ENCODE measurements at regions of chr5 and their contacts with region 1.

Region 1: DNA sequence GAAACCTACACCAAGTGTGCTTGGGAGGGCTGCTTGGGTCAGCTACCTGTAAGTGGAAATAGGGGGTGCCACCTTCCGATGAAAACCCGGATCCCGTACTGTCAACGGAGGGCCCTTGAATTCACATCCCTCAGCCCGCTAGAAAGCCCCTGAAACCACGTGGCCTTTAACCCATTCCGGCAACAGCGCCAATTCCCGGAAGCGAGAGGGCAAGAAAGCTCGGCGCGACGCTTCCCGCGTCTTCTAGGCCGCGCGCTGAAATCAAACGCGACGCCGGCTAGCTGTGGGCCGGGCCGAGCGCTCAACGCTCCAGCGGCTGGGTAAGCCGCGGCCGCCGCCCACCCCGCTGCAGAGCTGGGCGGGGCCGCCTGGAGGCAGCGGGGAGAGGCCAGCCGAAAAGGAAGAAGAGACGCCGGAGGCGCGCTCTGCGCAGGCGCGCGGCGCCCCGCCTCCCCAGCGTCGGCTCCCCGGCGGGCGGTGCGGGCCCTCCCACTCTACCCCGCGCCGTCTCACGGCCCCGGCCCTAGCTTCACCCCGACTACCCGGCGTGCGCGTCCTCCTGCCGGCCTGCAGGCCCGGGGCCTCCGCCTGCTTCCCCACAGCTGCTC is at the start of gene KIF2A:
- DNase-seq: peak; percentile 97
- ATAC-seq: peak; percentile 91
- H3K4me3 Mint-ChIP-seq: peak within 1 kb of the TSS; percentile 100
- H3K27ac Mint-ChIP-seq: peak within 1 kb of the TSS; percentile 100
- H3K4me1 Mint-ChIP-seq: peaks cover 48% of the 10 kb centered on the region
- H3K27me3 Mint-ChIP-seq: no peaks in the 10 kb centered on the region
- total RNA-seq, gene KIF2A: 149 to 151 TPM

Region 2: GRCh38 chr5:62403434-62404250 is 97.8 kb after region 1 on chr5 and contains the start of gene DIMT1:
- CTCF ChIA-PET with region 1: interaction called, 4 read pairs
- POLR2A ChIA-PET with region 1: interaction called, 14 read pairs
- DNase-seq: peak; percentile 97
- ATAC-seq: peak; percentile 97
- H3K4me3 Mint-ChIP-seq: peak within 1 kb of the TSS; percentile 96
- H3K27ac Mint-ChIP-seq: peak within 1 kb of the TSS; percentile 93
- H3K4me1 Mint-ChIP-seq: peaks cover 35% of the 10 kb centered on the region
- H3K27me3 Mint-ChIP-seq: no peaks in the 10 kb centered on the region
- total RNA-seq, gene DIMT1: 24.8 to 28.8 TPM

Measured in activated CD8-positive, alpha-beta T cell treated with anti-CD3 and anti-CD28 coated beads, Interleukin-2, amount 10 ng/mL, durations not matched to agents 7 days and 5 days (primary cell).